Activated CD4-positive, alpha-beta T cell treated with anti-CD3 and anti-CD28 coated beads, Interleukin-2, amount 10 ng/mL, durations not matched to agents 24 days and 14 days (primary cell): ENCODE measurements at regions of chr11 and their contacts with region 1.

Region 1: GRCh38 chr11:111230122-111230465 is 15.4 kb upstream of the POU2AF2 start:
- DNase-seq: no peak
- H3K4me3 Mint-ChIP-seq: peak overlapping the region; percentile 68
- H3K27ac Mint-ChIP-seq: no peak overlapping the region
- H3K4me1 Mint-ChIP-seq: peaks cover 18% of the 10 kb centered on the region
- H3K27me3 Mint-ChIP-seq: peaks cover 26% of the 10 kb centered on the region

Region 2: GRCh38 chr11:110447897-110448745 is 782.0 kb before region 1 on chr11:
- intact Hi-C with region 1: loop called (anchors 5 kb)
- DNase-seq: no peak
- H3K4me3 Mint-ChIP-seq: no peak overlapping the region
- H3K27ac Mint-ChIP-seq: no peak overlapping the region
- H3K4me1 Mint-ChIP-seq: peaks cover 26% of the 10 kb centered on the region
- H3K27me3 Mint-ChIP-seq: no peaks in the 10 kb centered on the region

Region 3: GRCh38 chr11:110711776-110712658 is 518.1 kb before region 1 on chr11 and contains the start of gene ARHGAP20:
- intact Hi-C with region 1: loop called (anchors 10 kb)
- DNase-seq: peak; percentile 82
- H3K4me3 Mint-ChIP-seq: peak within 1 kb of the TSS; percentile 65
- H3K27ac Mint-ChIP-seq: no peak within 1 kb of the TSS
- H3K4me1 Mint-ChIP-seq: peaks cover 14% of the 10 kb centered on the region
- H3K27me3 Mint-ChIP-seq: peaks cover 60% of the 10 kb centered on the region
- total RNA-seq, gene ARHGAP20: not detected in 2 replicates